ENCODE measurements at regions of chr7 and their contacts with region 1.

Region 1: DNA sequence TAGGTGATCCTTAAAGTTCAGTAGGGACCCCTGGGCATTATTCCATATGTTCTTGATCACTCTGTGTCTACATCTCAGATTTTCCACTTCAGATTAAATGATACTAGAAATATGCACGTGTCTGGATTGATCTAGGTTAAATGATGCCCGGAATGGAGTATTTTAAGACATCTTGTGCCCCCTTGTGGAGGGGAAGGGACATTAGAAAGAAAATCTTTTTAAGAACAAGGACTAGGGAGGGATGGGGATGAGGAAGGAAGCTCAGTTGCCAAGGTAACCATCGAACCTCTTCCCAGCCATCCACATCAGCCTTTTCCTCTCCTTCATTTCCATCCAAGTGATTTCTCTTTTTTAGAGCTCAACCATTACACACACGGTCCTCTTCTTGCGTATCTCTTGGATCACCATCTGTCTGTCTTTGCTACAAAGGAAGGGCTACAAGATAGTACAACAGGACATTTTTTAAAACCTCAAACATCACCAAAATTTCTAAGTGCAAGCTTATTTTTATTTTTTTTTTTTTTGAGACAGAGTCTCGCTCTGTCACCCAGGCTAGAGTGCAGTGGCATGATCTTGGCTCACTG is 40.5 kb downstream of the PRSS2 start:
- DNase-seq: peak in 1 of 2 experiments; percentile 44
- H3K4me3 ChIP-seq: no peak overlapping the region
- H3K4me3 Mint-ChIP-seq: no peak overlapping the region
- H3K27ac Mint-ChIP-seq: no peak overlapping the region
- H3K4me1 ChIP-seq: peaks cover 27% of the 10 kb centered on the region
- H3K4me1 Mint-ChIP-seq: peaks cover 35% of the 10 kb centered on the region
- H3K27me3 ChIP-seq: no peaks in the 10 kb centered on the region
- H3K27me3 Mint-ChIP-seq: no peaks in the 10 kb centered on the region
- CTCF ChIP-seq: peak; percentile 56 to 68

Region 2: GRCh38 chr7:142603870-142604448 is 207.3 kb before region 1 on chr7:
- CTCF ChIA-PET with region 1: interaction called, 3 read pairs
- POLR2A ChIA-PET with region 1: no interaction called
- intact Hi-C with region 1: loop called (anchors 1 kb)
- DNase-seq: peak; percentile 52 to 65
- H3K4me3 ChIP-seq: no peak overlapping the region
- H3K4me3 Mint-ChIP-seq: no peak overlapping the region
- H3K27ac Mint-ChIP-seq: no peak overlapping the region
- H3K4me1 ChIP-seq: no peaks in the 10 kb centered on the region
- H3K4me1 Mint-ChIP-seq: peaks cover 6% of the 10 kb centered on the region
- H3K27me3 ChIP-seq: no peaks in the 10 kb centered on the region
- H3K27me3 Mint-ChIP-seq: peaks cover 23% of the 10 kb centered on the region
- CTCF ChIP-seq: peak; percentile 79 to 93

Region 3: DNA sequence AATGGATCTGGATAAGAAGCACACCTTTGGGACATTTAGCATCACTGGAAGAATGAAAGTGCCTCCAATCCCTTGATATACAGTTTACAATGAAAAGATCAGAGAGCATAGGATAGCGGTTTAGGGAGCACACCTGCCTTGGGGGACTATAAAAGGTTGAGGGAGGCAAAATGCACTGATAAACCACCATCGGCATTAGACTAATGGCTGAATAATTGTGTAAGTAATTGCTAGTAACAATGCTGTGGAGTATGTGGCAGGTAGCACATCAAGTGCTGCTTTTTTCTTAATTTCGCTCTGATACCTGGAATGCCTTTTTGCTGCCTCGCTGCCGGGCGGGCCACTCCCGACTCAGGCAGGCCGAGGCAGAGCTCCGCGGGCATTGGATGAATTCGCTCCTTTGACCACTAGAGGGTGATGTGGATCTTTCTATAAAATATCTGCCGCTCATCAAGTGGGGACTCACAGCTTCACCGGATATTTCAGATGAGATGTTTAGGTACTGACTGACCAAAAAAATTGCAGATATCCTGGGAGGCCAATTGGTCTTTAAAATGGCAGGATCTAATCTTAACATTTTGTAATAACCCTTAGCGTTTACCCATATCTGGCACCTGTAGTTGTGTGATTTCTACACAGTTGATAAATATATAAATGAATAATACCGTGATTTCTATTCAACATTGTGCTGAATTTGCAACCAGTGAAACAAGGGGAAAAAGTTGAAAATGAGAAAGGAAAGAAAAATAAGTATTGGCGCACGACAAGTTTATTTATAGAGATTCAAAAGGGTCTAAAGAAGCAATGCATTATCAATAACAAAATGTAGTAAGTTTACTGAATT is 178.7 kb before region 1 on chr7:
- CTCF ChIA-PET with region 1: interaction called, 7 read pairs
- POLR2A ChIA-PET with region 1: no interaction called
- intact Hi-C with region 1: loop called (anchors 1 kb)
- DNase-seq: peak; percentile 48 to 76
- H3K4me3 ChIP-seq: no peak overlapping the region
- H3K4me3 Mint-ChIP-seq: no peak overlapping the region
- H3K27ac Mint-ChIP-seq: no peak overlapping the region
- H3K4me1 ChIP-seq: no peaks in the 10 kb centered on the region
- H3K4me1 Mint-ChIP-seq: no peaks in the 10 kb centered on the region
- H3K27me3 ChIP-seq: peaks cover 1% of the 10 kb centered on the region
- H3K27me3 Mint-ChIP-seq: peaks cover 20% of the 10 kb centered on the region
- CTCF ChIP-seq: peak; percentile 72 to 74

Region 4: DNA sequence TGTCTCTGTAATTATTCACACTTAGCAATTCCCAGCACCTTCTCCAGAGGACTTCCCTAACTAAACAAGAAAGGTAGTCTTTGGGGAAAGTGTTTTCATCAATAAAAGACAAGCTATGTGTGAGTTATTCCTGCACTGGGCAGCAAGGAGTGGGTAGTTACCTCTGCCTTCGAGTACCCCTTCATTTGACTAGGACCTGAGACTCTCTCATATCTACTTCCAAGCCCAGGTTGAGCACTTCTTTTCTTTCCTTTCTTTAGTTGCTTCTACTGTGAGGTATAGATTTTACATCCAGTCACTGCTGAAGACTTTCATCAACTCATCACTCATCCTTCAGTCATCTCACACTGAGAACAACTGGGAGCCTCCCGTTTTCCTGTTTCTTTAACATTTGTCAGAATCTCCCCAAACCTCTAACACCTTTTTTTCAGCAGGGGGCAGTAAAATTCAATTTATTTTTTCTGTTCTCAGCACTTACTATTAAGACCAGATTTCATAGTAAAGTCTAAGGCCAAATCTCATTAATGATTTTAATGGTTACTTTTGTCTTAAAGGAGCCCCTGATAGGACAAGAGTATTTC is 142.1 kb before region 1 on chr7:
- CTCF ChIA-PET with region 1: no interaction called
- POLR2A ChIA-PET with region 1: no interaction called
- intact Hi-C with region 1: loop called (anchors 1 kb)
- DNase-seq: peak in 1 of 2 experiments; percentile 5
- H3K4me3 ChIP-seq: no peak overlapping the region
- H3K4me3 Mint-ChIP-seq: no peak overlapping the region
- H3K27ac Mint-ChIP-seq: no peak overlapping the region
- H3K4me1 ChIP-seq: no peaks in the 10 kb centered on the region
- H3K4me1 Mint-ChIP-seq: no peaks in the 10 kb centered on the region
- H3K27me3 ChIP-seq: no peaks in the 10 kb centered on the region
- H3K27me3 Mint-ChIP-seq: peaks cover 11% of the 10 kb centered on the region
- CTCF ChIP-seq: peak; percentile 7 to 27

Region 5: GRCh38 chr7:142853739-142854371 is 42.6 kb after region 1 on chr7:
- CTCF ChIA-PET with region 1: interaction called, 5 read pairs
- POLR2A ChIA-PET with region 1: no interaction called
- intact Hi-C with region 1: loop called (anchors 1 kb)
- DNase-seq: peak; percentile 64 to 75
- H3K4me3 ChIP-seq: peak overlapping the region; percentile 76
- H3K4me3 Mint-ChIP-seq: peak overlapping the region; percentile 91
- H3K27ac Mint-ChIP-seq: peak overlapping the region; percentile 47
- H3K4me1 ChIP-seq: peaks cover 6% of the 10 kb centered on the region; the same call in 1 of the 2 replicates
- H3K4me1 Mint-ChIP-seq: peaks cover 7% of the 10 kb centered on the region
- H3K27me3 ChIP-seq: no peaks in the 10 kb centered on the region; the same call in none of the 2 replicates
- H3K27me3 Mint-ChIP-seq: peaks cover 14% of the 10 kb centered on the region
- CTCF ChIP-seq: peak; percentile 83 to 85

Region 6: GRCh38 chr7:142866361-142867058 is 55.3 kb after region 1 on chr7:
- CTCF ChIA-PET with region 1: no interaction called
- POLR2A ChIA-PET with region 1: no interaction called
- intact Hi-C with region 1: loop called (anchors 1 kb)
- DNase-seq: peak; percentile 61 to 70
- H3K4me3 ChIP-seq: no peak overlapping the region
- H3K4me3 Mint-ChIP-seq: no peak overlapping the region
- H3K27ac Mint-ChIP-seq: no peak overlapping the region
- H3K4me1 ChIP-seq: no peaks in the 10 kb centered on the region
- H3K4me1 Mint-ChIP-seq: no peaks in the 10 kb centered on the region
- H3K27me3 ChIP-seq: no peaks in the 10 kb centered on the region
- H3K27me3 Mint-ChIP-seq: no peaks in the 10 kb centered on the region
- CTCF ChIP-seq: peak; percentile 63 to 74

Measured in Caco-2 (cell line).